ENCODE measurements at regions of chr1 and their contacts with region 1.

Region 1: DNA sequence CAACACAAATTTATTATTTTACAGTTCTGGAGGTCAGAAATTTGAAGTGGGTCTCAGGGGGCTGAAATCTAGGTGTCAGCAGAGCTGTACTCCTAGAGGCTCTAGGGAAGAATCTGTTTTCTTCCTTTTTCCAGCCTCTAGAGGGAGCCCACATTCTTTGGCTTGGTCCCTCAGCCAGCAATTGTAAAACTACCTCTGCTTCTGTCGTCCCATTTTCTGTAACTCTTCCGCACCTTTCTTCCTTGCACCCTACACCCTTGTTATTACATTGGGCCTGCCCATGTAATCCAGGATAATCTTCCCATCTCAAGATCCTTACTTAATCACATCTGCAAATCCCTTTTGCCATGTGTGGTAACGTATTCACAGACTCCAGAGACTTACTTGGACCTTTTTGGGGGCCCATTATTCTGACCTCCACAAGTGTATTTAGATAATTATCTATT is 24.8 kb upstream of the THEM4 start:
- DNase-seq: peak; percentile 48
- H3K4me3 Mint-ChIP-seq: no peak overlapping the region
- H3K27ac Mint-ChIP-seq: no peak overlapping the region
- H3K4me1 Mint-ChIP-seq: peaks cover 2% of the 10 kb centered on the region
- H3K27me3 Mint-ChIP-seq: peaks cover 8% of the 10 kb centered on the region

Region 2: GRCh38 chr1:151828965-151829698 is 104.9 kb before region 1 on chr1:
- CTCF ChIA-PET with region 1: no interaction called
- POLR2A ChIA-PET with region 1: no interaction called
- DNase-seq: no peak
- H3K4me3 Mint-ChIP-seq: peak overlapping the region; percentile 65
- H3K27ac Mint-ChIP-seq: peak overlapping the region; percentile 97
- H3K4me1 Mint-ChIP-seq: peaks cover 90% of the 10 kb centered on the region
- H3K27me3 Mint-ChIP-seq: no peaks in the 10 kb centered on the region

Region 3: DNA sequence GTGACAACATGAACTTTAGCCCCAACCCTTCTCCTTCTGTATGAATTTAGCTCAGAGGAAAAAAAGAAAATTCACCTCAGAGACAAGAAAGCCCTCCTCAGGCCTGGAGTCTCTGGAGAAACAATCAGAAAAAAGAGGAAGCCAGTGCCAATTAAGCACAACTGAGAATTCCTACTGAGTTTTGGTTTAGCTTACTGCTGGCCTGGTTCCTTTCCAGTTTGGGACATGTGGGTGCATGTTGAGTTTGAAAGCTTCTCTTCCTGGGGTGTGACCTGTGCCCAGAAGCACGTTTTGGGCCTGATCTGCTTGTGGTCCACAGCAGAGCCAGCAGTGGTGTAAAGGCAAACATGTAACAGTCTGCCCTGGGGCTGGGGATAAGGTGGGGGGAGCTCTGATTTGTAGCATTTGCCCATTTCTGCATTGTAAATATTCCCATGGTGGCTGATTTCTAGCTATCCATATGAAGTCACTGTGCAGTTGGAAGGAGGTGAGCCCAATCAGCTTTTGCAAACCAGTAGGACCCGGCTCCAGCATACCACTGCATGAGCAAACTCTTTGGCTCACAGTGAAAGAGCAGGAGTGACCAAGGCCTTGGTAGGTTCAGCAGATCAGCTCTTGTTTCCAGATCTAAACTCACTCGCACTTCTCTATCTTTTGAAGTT is 75.9 kb before region 1 on chr1:
- CTCF ChIA-PET with region 1: no interaction called
- POLR2A ChIA-PET with region 1: no interaction called
- DNase-seq: no peak
- H3K4me3 Mint-ChIP-seq: no peak overlapping the region
- H3K27ac Mint-ChIP-seq: no peak overlapping the region
- H3K4me1 Mint-ChIP-seq: no peaks in the 10 kb centered on the region
- H3K27me3 Mint-ChIP-seq: no peaks in the 10 kb centered on the region

Region 4: DNA sequence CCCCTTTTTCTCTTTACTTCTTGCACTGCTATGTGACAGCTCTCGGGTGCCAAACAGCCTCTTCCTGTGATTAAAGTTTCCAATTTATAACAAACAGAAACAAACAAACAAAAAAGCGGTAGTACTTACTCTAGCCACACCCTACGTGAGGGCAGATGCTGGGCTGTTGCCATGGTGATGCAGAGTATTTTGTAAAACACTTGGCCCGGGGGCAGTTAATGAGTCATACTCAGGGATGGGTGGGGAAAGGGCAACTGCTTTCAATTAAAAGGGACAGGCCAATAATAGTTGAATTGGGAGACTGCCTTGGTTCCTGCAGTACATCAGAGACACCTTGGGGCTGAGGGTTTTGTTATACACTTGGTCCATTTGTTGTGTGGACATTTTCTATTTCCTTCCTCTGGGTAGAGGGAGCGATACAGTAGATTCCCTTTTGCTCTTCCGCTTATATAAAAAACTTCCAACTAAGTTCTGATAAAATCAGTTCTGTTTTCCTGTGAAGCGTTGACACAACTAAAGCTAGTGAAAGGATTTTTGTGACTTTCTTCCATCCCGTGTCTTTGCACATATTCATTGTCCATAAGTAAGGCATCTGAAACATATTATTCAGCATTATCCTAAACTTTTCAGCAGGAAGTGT is 11.8 kb after region 1 on chr1:
- CTCF ChIA-PET with region 1: interaction called, 15 read pairs
- POLR2A ChIA-PET with region 1: interaction called, 4 read pairs
- DNase-seq: peak; percentile 90
- H3K4me3 Mint-ChIP-seq: peak overlapping the region; percentile 56
- H3K27ac Mint-ChIP-seq: peak overlapping the region; percentile 88
- H3K4me1 Mint-ChIP-seq: peaks cover 41% of the 10 kb centered on the region
- H3K27me3 Mint-ChIP-seq: no peaks in the 10 kb centered on the region

Measured in activated CD4-positive, alpha-beta memory T cell treated with anti-CD3 and anti-CD28 coated beads, Interleukin-2, amount 10 ng/mL, durations not matched to agents 7 days and 5 days (primary cell).